ENCODE measurements at regions of chr19 and their contacts with region 1.

Region 1: GRCh38 chr19:29761575-29762232 is 46.6 kb upstream of the C19orf12 start:
- DNase-seq: no peak
- ATAC-seq: no peak
- H3K4me3 ChIP-seq: no peak overlapping the region
- H3K27ac ChIP-seq: no peak overlapping the region
- H3K4me1 ChIP-seq: no peaks in the 10 kb centered on the region
- CTCF ChIP-seq: no peak
- EP300 ChIP-seq: no peak
- POLR2A ChIP-seq: no peak
- RAD21 ChIP-seq: no peak

Region 2: GRCh38 chr19:29622138-29623070 is 139.3 kb before region 1 on chr19:
- CTCF ChIA-PET with region 1: no interaction called
- POLR2A ChIA-PET with region 1: no interaction called
- DNase-seq: no peak
- ATAC-seq: peak; percentile 12 to 33; a peak in 3 of 6 replicates
- H3K4me3 ChIP-seq: no peak overlapping the region
- H3K27ac ChIP-seq: no peak overlapping the region
- H3K4me1 ChIP-seq: no peaks in the 10 kb centered on the region
- CTCF ChIP-seq: no peak
- EP300 ChIP-seq: no peak
- POLR2A ChIP-seq: no peak
- RAD21 ChIP-seq: no peak

Region 3: DNA sequence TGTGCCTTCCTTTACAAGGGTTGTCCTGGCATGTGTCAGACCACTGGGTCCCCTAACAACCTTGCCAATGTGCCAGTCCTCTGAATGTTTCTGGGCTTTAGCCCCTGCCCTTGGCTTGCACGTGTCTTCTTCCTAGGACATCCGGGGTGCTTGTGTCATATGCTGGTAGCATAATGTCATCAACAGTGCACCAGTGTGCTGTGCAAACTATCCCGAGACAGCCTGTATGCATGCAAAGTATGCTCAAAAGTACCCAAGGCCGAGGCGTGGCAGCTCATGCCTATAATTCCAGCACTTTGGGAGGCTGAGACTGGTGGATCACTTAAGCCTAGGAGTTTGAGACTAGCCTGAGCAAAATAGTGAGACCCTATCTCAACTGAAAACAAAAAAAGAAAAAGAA is 25.9 kb before region 1 on chr19:
- CTCF ChIA-PET with region 1: interaction called, 99 read pairs
- POLR2A ChIA-PET with region 1: interaction called, 3 read pairs
- DNase-seq: peak in 1 of 2 experiments; percentile 31
- ATAC-seq: peak in 1 of 2 experiments; percentile 12; a peak in 2 of 6 replicates
- H3K4me3 ChIP-seq: no peak overlapping the region
- H3K27ac ChIP-seq: no peak overlapping the region
- H3K4me1 ChIP-seq: 0 out of 3 replicates have a peak, but pooled peaks cover 3% of the 10 kb centered on the region
- CTCF ChIP-seq: no peak
- EP300 ChIP-seq: no peak
- POLR2A ChIP-seq: no peak
- RAD21 ChIP-seq: no peak

Region 4: GRCh38 chr19:29779921-29780320 is 18.2 kb after region 1 on chr19:
- CTCF ChIA-PET with region 1: interaction called, 243 read pairs
- POLR2A ChIA-PET with region 1: no interaction called
- DNase-seq: no peak
- ATAC-seq: peak in 1 of 2 experiments; percentile 63; a peak in 3 of 6 replicates
- H3K4me3 ChIP-seq: no peak overlapping the region
- H3K27ac ChIP-seq: no peak overlapping the region
- H3K4me1 ChIP-seq: no peaks in the 10 kb centered on the region
- CTCF ChIP-seq: no peak
- EP300 ChIP-seq: no peak
- POLR2A ChIP-seq: no peak
- RAD21 ChIP-seq: no peak

Region 5: GRCh38 chr19:29806098-29806866 is 44.6 kb after region 1 on chr19:
- CTCF ChIA-PET with region 1: interaction called, 35 read pairs
- POLR2A ChIA-PET with region 1: no interaction called
- DNase-seq: peak; percentile 53 to 89
- ATAC-seq: peak in 1 of 2 experiments; percentile 78; a peak in 3 of 6 replicates
- H3K4me3 ChIP-seq: no peak overlapping the region
- H3K27ac ChIP-seq: peak overlapping the region in 1 of 2 experiments; percentile 6; a peak in 1 of 6 replicates
- H3K4me1 ChIP-seq: peaks cover 14% of the 10 kb centered on the region
- CTCF ChIP-seq: no peak
- EP300 ChIP-seq: no peak
- POLR2A ChIP-seq: no peak
- RAD21 ChIP-seq: no peak

Region 6: DNA sequence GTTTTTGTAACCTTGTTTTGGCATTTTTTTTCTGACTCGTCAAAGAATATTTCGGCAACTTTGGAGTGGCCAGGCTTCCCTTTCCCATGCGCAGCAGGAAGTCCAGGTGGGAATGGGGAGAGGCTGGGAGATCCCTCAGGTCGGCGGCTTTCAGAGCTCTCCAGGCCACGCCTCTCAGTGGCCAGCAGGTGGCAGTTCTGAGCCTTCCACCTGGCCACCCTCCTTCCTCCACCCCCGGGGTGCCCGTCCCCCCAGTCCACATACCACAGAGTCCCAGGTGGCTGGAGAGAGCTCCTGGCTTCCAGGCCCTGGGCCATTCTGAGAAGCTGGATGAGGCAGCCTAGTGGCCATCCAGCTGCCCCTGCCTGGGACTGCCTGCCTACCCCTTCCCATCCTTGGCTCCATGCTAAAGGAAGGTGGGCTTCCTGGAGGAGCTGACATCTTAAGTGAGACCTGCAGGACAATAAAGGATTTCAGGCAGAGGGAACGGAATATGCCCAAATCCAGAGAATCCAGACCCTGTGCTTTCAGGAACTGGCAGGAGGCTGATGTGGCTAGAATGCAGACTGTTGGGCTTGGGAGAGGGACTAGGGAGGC is 96.4 kb after region 1 on chr19:
- CTCF ChIA-PET with region 1: interaction called, 53 read pairs
- POLR2A ChIA-PET with region 1: no interaction called
- DNase-seq: peak; percentile 60 to 63
- ATAC-seq: peak; percentile 78 to 86
- H3K4me3 ChIP-seq: no peak overlapping the region
- H3K27ac ChIP-seq: no peak overlapping the region
- H3K4me1 ChIP-seq: no peaks in the 10 kb centered on the region
- CTCF ChIP-seq: peak; percentile 68
- EP300 ChIP-seq: no peak
- POLR2A ChIP-seq: no peak
- RAD21 ChIP-seq: peak; percentile 63

Region 7: DNA sequence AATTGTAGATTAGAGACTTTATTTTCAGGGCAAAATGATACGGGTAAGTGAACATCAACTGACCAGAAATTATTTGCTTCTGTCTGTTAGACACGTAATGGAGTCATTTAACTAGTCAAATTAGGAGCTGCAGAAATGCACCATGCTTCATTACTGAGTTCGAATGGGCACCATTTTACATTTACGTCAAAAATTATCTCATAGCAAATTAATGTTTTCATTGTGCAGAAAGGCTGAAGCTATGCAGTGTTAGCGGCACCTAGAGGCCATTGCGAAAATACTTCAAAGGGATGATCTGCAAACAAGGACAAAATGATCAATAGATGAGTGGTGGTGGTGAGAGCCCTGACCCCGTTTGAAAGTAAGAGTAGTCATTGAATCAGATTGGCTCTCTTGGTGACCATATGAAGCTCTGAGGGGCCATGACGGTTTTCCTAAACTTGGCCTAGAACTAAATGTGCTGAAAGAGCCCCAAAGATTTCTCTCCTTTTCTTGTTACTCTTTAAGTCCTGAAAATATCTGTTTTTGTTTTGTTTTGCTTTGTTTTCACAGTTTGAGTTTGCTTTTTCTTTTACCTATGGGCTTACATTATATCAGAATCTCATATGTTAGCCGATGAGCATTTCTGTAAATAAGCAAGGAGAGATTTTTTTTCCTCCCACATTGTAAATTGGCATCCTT is 888.4 kb after region 1 on chr19:
- CTCF ChIA-PET with region 1: interaction called, 24 read pairs
- POLR2A ChIA-PET with region 1: no interaction called
- DNase-seq: peak; percentile 72 to 87
- ATAC-seq: peak; percentile 50 to 85; a peak in 5 of 6 replicates
- H3K4me3 ChIP-seq: no peak overlapping the region
- H3K27ac ChIP-seq: no peak overlapping the region
- H3K4me1 ChIP-seq: no peaks in the 10 kb centered on the region
- CTCF ChIP-seq: peak; percentile 99
- EP300 ChIP-seq: no peak
- POLR2A ChIP-seq: no peak
- RAD21 ChIP-seq: peak; percentile 94 to 98

Region 8: GRCh38 chr19:30679282-30679681 is 917.6 kb after region 1 on chr19:
- CTCF ChIA-PET with region 1: no interaction called
- POLR2A ChIA-PET with region 1: no interaction called
- DNase-seq: no peak
- ATAC-seq: no peak
- H3K4me3 ChIP-seq: no peak overlapping the region
- H3K27ac ChIP-seq: no peak overlapping the region
- H3K4me1 ChIP-seq: peaks cover 3% of the 10 kb centered on the region; the same call in 1 of the 3 replicates
- CTCF ChIP-seq: no peak
- EP300 ChIP-seq: no peak
- POLR2A ChIP-seq: no peak
- RAD21 ChIP-seq: no peak

Measured in A549 (cell line).